K562 (cell line): ENCODE measurements at regions of chr2 and their contacts with region 1.

Region 1: GRCh38 chr2:108560241-108560811 is 26.1 kb downstream of the LIMS1 start:
- DNase-seq: no peak
- ATAC-seq: peak; percentile 34
- H3K4me3 ChIP-seq: no peak overlapping the region
- H3K27ac ChIP-seq: no peak overlapping the region
- H3K4me1 ChIP-seq: peaks cover 0 to 4% of the 10 kb centered on the region in 2 experiments; a peak in 2 of 5 replicates
- H3K27me3 ChIP-seq: no peaks in the 10 kb centered on the region
- CTCF ChIP-seq: no peak
- EP300 ChIP-seq: no peak
- POLR2A ChIP-seq: no peak
- RAD21 ChIP-seq: no peak

Region 2: GRCh38 chr2:108541451-108541850 is 18.9 kb before region 1 on chr2:
- CTCF ChIA-PET with region 1: no interaction called
- POLR2A ChIA-PET with region 1: interaction called, 5 read pairs
- in situ Hi-C with region 1: no loop called
- intact Hi-C with region 1: loop called (anchors 1 kb)
- DNase-seq: no peak
- ATAC-seq: no peak
- H3K4me3 ChIP-seq: no peak overlapping the region
- H3K27ac ChIP-seq: no peak overlapping the region
- H3K4me1 ChIP-seq: peaks cover 3 to 14% of the 10 kb centered on the region in 2 experiments; a peak in 3 of 5 replicates
- H3K27me3 ChIP-seq: no peaks in the 10 kb centered on the region
- CTCF ChIP-seq: no peak
- EP300 ChIP-seq: no peak
- POLR2A ChIP-seq: no peak
- RAD21 ChIP-seq: no peak